Activated CD4-positive, alpha-beta T cell treated with anti-CD3 and anti-CD28 coated beads for 36 hours (primary cell): ENCODE measurements at regions of chr22 and their contacts with region 1.

Region 1: GRCh38 chr22:38740754-38741153 is 15.0 kb downstream of the SUN2 start:
- DNase-seq: no peak
- ATAC-seq: no peak
- H3K4me3 Mint-ChIP-seq: no peak overlapping the region
- H3K27ac Mint-ChIP-seq: no peak overlapping the region
- H3K4me1 Mint-ChIP-seq: peaks cover 25% of the 10 kb centered on the region
- H3K27me3 Mint-ChIP-seq: no peaks in the 10 kb centered on the region

Region 2: GRCh38 chr22:38012604-38013072 is 728.1 kb before region 1 on chr22:
- CTCF ChIA-PET with region 1: no interaction called
- POLR2A ChIA-PET with region 1: no interaction called
- intact Hi-C with region 1: no loop called
- DNase-seq: no peak
- ATAC-seq: no peak
- H3K4me3 Mint-ChIP-seq: no peak overlapping the region
- H3K27ac Mint-ChIP-seq: no peak overlapping the region
- H3K4me1 Mint-ChIP-seq: no peaks in the 10 kb centered on the region
- H3K27me3 Mint-ChIP-seq: no peaks in the 10 kb centered on the region

Region 3: DNA sequence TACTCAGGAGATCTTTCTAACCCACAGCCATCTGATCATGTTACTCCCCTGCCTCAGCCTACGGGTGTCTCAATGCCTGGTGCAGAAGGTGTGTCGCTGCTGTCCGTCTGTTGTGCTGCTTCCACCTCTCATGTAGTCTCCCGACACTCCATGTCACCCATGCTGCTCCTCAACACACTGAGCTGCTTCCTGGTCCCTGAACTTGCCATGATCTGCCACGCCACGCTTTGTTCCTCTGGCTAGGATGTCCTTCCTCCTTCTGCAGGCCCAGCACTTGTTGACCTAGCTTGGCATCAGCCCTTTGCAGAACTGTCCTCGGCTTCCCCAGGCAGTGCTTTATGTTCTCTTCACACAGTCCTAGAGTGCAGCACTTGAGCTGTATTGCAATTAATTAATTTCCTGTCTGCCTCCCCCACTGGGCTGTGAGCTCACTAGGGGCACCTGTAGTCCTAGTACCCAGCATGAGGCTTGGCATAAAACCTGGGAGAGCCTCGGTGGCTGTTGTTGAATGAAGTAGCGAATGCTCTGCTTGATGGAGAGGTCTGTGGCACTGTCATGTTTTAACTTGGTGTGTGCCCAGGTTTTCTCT is 25.5 kb before region 1 on chr22:
- CTCF ChIA-PET with region 1: interaction called, 3 read pairs
- POLR2A ChIA-PET with region 1: interaction called, 3 read pairs
- intact Hi-C with region 1: loop called in 1 of 2 experiments (anchors 2 kb)
- DNase-seq: no peak
- ATAC-seq: no peak
- H3K4me3 Mint-ChIP-seq: no peak overlapping the region
- H3K27ac Mint-ChIP-seq: peak overlapping the region; percentile 23
- H3K4me1 Mint-ChIP-seq: peaks cover 50% of the 10 kb centered on the region
- H3K27me3 Mint-ChIP-seq: no peaks in the 10 kb centered on the region